HEK293T (cell line): ENCODE measurements at regions of chr9 and their contacts with region 1.

Region 1: DNA sequence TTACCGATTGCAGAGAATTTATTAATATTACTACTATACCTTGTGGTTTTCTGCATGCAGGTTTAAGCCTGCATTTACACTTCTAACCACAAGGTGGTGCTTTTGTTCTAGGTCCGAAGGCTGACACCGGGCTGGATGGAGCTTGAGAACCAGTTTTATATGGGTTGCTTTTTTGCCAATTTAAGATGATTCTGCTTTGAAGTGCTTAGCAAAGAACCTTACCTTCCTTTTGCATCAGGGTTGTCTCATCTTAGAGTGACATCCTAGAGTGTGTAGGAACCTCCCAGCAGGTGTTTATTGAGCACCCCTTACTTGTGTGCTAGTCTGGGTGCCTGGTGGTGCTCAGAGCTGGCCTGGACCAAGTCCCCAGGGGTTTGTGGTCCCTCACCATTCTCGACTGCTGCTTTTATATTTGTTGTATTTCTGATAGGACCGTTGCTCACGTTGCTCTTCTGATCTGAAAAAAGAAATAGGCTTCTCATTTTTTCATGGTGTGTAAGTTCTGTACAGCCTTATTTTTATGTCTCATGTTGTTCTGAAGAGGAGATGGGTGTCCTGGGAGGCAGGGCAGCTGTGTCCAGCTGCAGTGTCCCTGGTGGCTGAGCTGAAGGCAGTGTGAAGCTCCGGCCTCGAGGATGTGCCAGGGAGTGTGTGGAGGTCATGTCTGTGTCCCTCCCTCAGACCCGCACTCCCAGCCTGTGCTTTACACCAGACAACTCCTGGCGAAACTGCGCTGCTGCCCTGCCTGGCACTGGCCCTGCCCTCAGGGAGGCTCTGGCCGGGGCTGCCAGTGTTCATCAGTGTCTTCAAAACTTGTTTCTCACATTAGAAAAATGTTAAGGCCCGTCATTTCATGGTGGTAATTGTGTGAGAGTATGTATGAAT is 54.3 kb downstream of the EHMT1 start:
- DNase-seq: peak; percentile 70

Region 2: DNA sequence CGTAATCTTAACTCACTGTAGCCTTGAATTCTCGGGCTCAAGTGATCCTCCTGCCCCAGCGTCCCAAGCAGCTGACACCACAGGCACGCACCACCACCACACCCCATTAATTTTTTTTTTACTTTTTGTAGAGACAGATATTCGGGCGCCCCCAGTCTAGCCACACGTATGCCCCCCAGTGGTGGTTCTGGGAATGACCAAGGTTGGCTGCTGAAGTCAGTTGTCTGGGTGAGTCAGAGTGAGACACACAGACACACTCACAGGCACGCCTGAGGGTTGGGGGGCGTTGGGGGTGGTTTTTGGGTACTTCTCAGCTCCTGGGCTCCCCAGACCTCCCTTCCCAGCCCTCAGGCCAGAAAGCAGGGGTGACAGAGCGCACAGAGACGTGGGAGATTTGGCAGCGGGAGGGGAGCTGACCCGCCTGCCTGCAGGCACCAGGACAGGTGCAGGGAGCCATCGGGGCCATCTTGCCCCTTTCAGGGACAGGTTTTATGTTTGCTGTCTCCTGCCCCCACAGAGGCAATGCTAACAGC is 227.8 kb before region 1 on chr9:
- CTCF ChIA-PET with region 1: no interaction called
- POLR2A ChIA-PET with region 1: no interaction called
- DNase-seq: peak; percentile 58

Region 3: GRCh38 chr9:137647096-137647714 is 25.9 kb before region 1 on chr9:
- CTCF ChIA-PET with region 1: no interaction called
- POLR2A ChIA-PET with region 1: no interaction called
- DNase-seq: no peak

Region 4: DNA sequence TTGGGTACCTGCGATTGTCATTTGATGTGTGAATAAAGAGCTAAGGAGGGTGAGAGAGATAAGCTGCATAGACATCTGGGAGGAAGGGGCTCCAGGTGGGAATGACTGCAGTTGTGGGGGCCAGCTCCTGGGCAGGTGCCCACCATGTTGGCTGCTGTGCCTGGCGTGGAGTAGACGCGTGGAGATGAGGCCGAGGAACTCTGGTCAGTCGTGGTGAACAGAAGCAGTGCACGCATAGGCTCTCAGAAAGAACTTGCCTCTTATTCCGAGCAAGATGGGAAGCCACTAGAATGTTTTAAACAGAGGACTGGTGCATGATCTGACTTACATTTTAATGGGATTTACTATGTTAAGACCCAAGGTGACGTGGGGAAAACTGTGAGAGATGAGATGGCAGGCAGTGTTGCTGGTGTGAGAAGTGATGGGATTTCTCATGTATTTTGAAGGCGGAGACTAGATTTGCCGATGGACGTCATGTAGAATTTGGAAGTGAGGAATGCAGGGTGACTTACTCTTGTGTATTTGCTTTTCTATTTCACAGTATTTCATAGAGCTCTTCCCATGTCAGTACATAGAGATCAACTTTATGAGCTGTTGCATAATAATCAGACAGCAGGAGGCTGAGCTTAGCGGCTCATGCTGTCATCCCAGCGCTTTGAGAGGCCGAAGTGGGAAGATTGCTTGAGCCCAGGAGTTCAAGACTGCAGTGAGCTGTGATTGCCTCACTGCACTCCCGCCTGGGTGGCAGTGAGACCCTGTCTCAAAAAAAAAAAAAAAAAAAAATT is 16.8 kb after region 1 on chr9:
- CTCF ChIA-PET with region 1: interaction called, 11 read pairs
- POLR2A ChIA-PET with region 1: no interaction called
- DNase-seq: no peak